Lower leg skin (tissue), 4 donors: ENCODE measurements at regions of chr5 and their contacts with region 1.

Region 1: DNA sequence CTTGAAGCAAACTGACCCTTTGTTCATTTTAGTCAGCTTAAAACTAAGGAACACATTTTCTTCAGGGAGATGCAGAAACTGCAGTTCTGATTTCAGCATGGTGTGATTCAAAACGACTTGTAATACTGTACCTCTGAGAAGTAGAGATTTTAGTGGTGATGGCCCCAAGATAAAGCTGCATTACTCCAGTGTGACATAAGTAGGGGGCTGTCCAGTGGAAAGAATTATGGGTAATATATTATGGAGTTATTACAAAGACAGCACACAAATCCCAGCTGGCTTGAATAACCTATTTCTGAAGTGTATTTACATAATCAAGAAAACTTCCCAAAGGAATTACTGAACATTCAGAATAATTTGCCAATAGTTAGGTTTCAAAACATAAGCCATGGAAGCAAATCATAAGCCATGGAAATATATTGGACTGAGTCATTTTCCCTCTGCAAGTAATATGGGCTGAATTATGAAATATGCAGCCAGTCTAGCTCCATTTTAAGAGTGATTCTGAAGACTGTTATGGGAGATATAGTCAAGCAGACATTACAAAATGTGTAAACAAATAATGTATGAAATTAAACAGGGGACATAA is 133.7 kb upstream of the FBXL17 start:
- DNase-seq: no peak
- H3K4me3 ChIP-seq: no peak overlapping the region
- CTCF ChIP-seq: no peak
- POLR2A ChIP-seq: no peak

Region 2: DNA sequence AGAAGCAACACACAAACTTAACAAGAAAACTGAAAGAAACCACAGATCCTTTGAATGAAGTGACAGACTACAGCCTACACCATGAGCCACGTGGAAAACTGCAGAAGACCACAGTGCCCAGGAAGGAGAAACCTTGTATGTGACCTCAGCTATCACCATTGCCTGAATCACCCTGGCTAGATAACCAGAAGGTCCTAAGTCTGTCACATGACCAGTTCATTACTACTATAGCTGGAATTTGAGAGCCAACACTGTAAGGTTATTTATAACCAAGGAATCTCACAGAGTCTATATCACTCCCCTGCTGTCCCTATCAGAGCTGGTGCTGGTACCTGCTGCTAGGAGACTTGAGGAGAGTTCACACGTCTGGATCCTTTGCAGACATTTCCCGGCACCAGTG is 43.4 kb before region 1 on chr5:
- intact Hi-C with region 1: loop called (anchors 2 kb)
- DNase-seq: no peak
- H3K4me3 ChIP-seq: no peak overlapping the region
- CTCF ChIP-seq: no peak
- POLR2A ChIP-seq: no peak